Ascending aorta (tissue), 2 donors: ENCODE measurements at regions of chrX and their contacts with region 1.

Region 1: GRCh38 chrX:106611679-106612392 is at the start of gene RADX:
- DNase-seq: peak; percentile 23 to 87
- H3K4me3 ChIP-seq: peak within 1 kb of the TSS; percentile 49 to 62
- H3K27ac ChIP-seq: no peak within 1 kb of the TSS
- H3K4me1 ChIP-seq: no peaks in the 10 kb centered on the region
- H3K27me3 ChIP-seq: no peaks in the 10 kb centered on the region
- CTCF ChIP-seq: no peak
- total RNA-seq, gene RADX: not detected

Region 2: DNA sequence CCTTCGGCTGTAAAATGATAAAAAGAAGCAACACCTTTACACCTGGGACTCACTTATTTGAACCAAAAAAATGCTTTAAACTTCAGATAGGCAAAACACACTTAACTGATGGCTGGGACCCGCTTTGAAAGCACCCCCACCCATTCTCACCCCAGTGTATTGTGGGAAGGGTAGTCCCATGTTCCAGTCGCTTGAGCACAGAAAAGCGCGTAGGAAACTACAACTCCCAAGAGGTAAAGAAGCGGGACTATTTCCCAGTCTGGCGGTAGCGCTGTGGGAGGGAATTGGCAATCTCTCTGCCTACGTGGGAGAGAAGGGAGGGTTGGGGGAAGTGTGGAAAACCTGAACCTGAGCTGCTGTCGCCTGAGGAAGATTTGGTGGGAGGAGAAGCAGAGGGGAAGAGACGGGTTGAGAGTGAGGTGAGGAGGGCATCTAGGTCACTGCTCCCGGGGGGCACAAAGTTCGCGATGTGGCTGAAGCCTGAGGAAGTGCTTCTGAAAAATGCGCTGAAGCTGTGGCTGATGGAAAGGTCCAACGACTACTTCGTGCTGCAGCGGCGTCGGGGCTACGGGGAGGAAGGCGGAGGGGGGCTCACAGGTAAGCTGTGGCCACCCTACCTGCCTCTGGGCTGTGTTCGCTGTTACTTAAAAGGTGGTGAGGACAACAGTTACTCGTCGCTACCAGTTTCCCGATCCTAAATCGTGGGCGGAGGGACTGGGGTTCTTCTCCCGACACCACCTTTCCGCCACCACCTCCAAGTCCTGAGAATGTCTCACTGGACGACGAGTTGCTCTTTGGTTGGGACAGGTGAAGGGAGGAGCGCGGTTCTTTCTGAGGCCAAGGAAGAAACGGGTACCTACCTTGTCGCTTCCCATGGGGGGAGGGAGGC is 190.8 kb after region 1 on chrX and contains the start of gene TBC1D8B:
- intact Hi-C with region 1: loop called (anchors 10 kb)
- DNase-seq: peak; percentile 22 to 87
- H3K4me3 ChIP-seq: peak within 1 kb of the TSS; percentile 62 to 69
- H3K27ac ChIP-seq: peak within 1 kb of the TSS in 1 of 2 donors; percentile 11
- H3K4me1 ChIP-seq: no peaks in the 10 kb centered on the region
- H3K27me3 ChIP-seq: no peaks in the 10 kb centered on the region
- CTCF ChIP-seq: no peak
- total RNA-seq, gene TBC1D8B: 7.1 TPM